ENCODE measurements at regions of chr7 and their contacts with region 1.

Region 1: GRCh38 chr7:148884299-148885022 is 370 bp upstream of the EZH2 start:
- DNase-seq: peak; percentile 97
- ATAC-seq: peak; percentile 100

Region 2: GRCh38 chr7:148738737-148739535 is 145.5 kb before region 1 on chr7:
- intact Hi-C with region 1: no loop called
- DNase-seq: no peak
- ATAC-seq: no peak

Region 3: DNA sequence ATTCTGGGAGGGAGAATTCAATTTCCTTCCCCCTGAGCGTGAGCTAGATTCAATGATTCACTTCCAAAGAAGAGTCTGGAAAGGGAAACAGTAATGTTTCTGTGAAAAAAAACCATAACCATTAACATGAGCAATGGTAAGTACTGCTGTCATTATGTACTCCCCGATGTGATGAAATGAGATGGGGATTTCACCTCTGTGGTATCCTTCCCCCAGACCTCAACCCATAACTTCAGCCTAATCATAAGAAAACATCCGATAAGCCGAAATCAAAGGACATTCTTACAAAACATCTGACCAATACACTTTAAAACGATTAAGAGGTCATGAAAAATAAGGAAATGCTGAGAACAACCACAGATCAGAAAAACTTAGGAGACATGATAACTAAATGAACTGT is 27.6 kb before region 1 on chr7:
- intact Hi-C with region 1: no loop called
- DNase-seq: no peak
- ATAC-seq: no peak

Region 4: GRCh38 chr7:148940702-148941597 is 56.5 kb after region 1 on chr7:
- intact Hi-C with region 1: loop called (anchors 2 kb)
- DNase-seq: peak; percentile 89
- ATAC-seq: peak; percentile 98

Region 5: DNA sequence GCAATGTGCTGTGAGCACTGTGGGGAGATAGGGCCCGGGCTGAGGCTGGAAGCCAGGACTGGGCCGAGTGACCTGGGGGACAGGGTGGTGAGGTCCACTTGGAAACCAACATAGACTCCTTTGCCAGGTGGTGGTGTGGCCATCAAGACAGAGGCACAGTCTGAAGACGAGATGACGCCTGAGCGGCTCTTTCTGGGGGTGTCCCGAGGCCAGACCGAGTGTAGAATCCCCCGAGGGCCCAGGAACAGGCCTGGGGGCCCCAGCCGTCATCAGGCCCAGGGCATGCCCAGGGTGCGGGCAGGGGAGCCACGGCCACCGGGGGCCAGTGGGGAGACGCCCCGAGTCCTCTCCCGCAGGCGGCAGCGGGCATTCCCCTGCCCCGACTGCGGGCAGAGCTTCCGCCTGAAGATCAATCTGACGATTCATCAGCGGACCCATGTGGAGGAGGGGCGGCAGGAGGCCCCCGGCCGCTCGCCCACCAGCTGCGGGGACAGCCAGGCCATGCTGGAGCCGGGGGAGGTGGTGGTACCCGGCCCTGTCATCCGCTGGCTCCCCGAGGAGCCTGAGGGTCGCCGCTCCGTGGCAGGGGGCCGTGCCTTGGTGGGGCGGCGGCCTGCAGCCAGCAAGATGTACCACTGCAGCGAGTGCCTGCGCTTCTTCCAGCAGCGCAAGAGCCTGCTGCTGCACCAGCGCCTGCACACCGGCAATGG is 397.1 kb after region 1 on chr7:
- intact Hi-C with region 1: no loop called
- DNase-seq: no peak
- ATAC-seq: no peak

Measured in left ventricle myocardium superior (tissue), 1 donor.